ENCODE measurements at regions of chr2 and their contacts with region 1.

Region 1: DNA sequence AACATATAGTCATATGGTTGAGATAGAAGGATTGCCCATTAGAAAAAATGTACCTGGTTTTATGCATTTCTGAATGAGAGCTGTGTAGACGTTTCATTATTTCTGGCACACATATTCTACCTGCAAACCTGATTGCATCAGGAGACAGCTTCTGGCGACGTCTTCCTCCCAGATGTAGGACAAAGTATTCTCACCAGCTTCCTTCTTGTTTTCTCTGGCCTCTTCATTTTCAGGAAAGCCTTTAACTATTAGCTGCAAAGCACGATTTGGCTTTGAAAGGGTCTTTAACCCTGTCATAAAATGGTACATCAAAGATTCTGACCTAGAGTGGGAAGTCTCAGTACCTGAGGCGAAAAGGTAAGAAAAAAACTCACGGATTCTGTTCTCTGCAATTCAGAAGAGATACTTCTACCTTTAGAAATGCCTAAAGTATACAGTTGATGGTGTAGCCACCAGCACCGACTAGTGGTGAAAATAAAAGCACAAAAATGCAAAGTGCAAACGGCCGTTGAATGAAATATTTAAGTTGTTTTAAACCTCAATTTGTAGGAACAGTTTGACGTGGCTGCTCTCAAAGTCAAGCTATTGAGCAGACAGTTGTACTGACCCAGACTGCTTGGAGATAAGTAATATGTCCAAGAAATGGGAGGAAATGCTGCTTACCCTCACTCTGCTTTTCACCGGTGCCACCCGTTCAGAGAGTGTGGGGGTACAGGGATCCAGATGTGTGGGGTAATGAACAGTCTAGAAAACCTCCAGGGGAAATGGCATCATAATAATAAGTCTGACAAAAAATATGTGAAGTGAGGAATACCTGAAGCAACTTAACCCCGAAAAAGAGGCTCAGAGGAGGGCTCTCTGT is 20.2 kb downstream of the IL18RAP start:
- DNase-seq: no peak
- ATAC-seq: peak; percentile 83
- H3K4me3 Mint-ChIP-seq: peak overlapping the region; percentile 71
- H3K27ac Mint-ChIP-seq: peak overlapping the region; percentile 69
- H3K4me1 Mint-ChIP-seq: peaks cover 10% of the 10 kb centered on the region
- H3K27me3 Mint-ChIP-seq: no peaks in the 10 kb centered on the region

Region 2: GRCh38 chr2:102355526-102356380 is 87.4 kb before region 1 on chr2 and contains the start of gene IL18R1:
- POLR2A ChIA-PET with region 1: interaction called, 11 read pairs
- DNase-seq: peak; percentile 91
- ATAC-seq: peak; percentile 87
- H3K4me3 Mint-ChIP-seq: peak within 1 kb of the TSS; percentile 100
- H3K27ac Mint-ChIP-seq: peak within 1 kb of the TSS; percentile 99
- H3K4me1 Mint-ChIP-seq: peaks cover 47% of the 10 kb centered on the region
- H3K27me3 Mint-ChIP-seq: no peaks in the 10 kb centered on the region
- total RNA-seq, gene IL18R1: 37.3 to 40.3 TPM

Region 3: DNA sequence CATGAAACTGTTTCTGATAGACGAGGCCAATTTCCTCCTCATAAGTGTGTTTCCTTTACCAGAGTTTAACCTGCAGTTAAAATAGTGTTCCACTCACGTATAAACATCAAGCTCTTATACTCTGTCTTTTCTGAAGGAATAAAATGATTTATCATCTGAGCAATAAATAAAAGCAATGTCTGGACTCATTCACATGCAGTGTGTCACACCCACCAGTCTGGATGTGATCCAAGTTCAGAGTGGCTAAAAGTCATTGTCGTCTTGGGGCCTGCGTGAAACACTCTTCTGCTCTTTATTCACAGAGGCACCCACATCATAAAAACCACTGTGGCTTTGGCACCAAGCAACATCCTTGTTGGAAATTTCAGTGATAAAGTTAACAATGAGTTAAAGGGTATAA is 10.3 kb after region 1 on chr2:
- POLR2A ChIA-PET with region 1: no interaction called
- DNase-seq: no peak
- ATAC-seq: no peak
- H3K4me3 Mint-ChIP-seq: no peak overlapping the region
- H3K27ac Mint-ChIP-seq: no peak overlapping the region
- H3K4me1 Mint-ChIP-seq: peaks cover 21% of the 10 kb centered on the region
- H3K27me3 Mint-ChIP-seq: peaks cover 4% of the 10 kb centered on the region

Measured in activated naive CD8-positive, alpha-beta T cell treated with anti-CD3 and anti-CD28 coated beads, Interleukin-2, amount 10 ng/mL, durations not matched to agents 7 days and 5 days (primary cell).